ENCODE measurements at regions of chr12 and their contacts with region 1.

Region 1: DNA sequence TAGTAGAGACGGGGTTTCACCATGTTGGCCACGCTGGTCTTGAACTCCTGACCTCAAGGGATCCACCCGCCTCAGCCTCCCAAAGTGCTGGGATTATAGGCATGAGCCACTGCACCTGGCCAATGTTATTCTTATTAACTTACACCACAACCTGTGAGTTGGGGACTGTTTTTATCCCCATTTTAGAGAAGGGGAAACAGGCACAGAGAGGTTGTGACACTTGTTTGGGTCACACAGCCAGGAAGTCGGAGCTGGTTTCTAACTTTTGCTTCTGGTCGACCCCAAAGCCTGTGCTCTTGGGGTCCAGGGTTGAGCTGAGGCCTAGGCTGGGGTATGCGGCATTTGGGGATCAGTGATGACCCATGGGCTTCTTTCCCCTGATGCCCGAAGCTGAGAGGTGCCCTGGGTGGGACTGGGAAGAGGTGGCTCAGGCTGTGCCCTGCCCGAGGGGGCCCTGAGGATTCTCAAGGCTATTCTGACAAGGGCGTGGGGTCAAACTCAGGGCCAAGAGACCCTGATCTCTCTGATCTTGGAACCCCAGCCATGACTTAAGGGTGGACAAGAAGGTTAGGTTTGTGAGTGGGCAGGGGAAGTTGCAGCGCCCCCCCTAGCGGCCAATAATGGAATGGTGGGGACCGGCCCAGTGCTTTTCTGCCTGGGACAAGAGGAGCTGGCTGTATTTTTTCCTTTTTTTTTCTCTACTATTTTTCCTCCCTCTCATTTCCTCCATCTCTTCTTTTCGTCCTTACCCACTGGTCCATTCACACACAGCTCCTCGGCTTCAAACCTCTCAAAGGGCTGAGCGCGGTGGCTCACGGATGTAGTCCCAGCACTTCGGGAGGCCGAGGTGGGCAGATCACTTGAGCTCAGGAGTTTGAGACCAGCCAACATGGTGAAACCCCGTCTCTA is 3.0 kb downstream of the SDSL start:
- DNase-seq: peak; percentile 80
- ATAC-seq: peak; percentile 67
- H3K4me3 Mint-ChIP-seq: peak overlapping the region; percentile 75
- H3K27ac Mint-ChIP-seq: peak overlapping the region; percentile 93
- H3K4me1 Mint-ChIP-seq: peaks cover 16% of the 10 kb centered on the region
- H3K27me3 Mint-ChIP-seq: no peaks in the 10 kb centered on the region; the same call in 1 of the 2 replicates
- CTCF ChIP-seq: peak; percentile 94

Region 2: GRCh38 chr12:113267621-113268395 is 157.4 kb before region 1 on chr12:
- CTCF ChIA-PET with region 1: no interaction called
- POLR2A ChIA-PET with region 1: no interaction called
- DNase-seq: no peak
- ATAC-seq: no peak
- H3K4me3 Mint-ChIP-seq: no peak overlapping the region
- H3K27ac Mint-ChIP-seq: no peak overlapping the region
- H3K4me1 Mint-ChIP-seq: no peaks in the 10 kb centered on the region
- H3K27me3 Mint-ChIP-seq: no peaks in the 10 kb centered on the region
- CTCF ChIP-seq: no peak

Region 3: GRCh38 chr12:113316155-113316554 is 109.0 kb before region 1 on chr12:
- CTCF ChIA-PET with region 1: interaction called, 17 read pairs
- POLR2A ChIA-PET with region 1: no interaction called
- DNase-seq: no peak
- ATAC-seq: no peak
- H3K4me3 Mint-ChIP-seq: no peak overlapping the region
- H3K27ac Mint-ChIP-seq: no peak overlapping the region
- H3K4me1 Mint-ChIP-seq: no peaks in the 10 kb centered on the region
- H3K27me3 Mint-ChIP-seq: no peaks in the 10 kb centered on the region
- CTCF ChIP-seq: no peak

Region 4: DNA sequence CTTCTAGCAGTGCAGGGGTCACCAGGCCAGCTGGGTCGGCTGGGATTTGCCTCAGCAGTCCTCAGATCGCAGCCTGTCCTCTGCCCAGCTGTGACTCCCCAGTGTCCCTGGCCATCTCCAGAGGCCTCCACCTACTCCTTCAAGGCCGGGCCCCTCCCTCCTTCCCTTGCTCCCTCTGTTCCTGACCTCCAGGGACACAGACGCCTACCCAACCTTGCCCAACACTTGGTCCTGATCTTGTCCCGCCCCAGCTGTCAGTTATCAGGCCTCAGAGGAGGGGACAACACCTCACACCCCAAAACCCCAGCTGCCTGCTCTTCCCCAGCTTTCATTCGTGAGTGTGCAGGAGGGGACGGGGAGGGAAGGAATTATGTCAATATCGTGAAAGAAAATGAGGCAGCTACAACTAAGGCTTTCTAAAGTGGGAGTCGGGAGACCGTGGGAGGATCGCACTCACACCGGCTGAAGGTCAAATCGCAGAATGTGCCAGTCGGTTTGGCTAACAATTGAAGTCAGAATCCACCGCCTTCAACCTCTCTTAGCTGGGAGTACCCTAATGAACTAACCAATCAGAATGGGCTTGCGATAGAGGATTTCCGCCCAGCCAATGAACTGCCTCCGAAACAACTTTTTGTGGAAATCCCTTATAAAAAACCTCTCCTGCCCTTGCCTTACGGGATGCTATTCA is 76.2 kb before region 1 on chr12:
- CTCF ChIA-PET with region 1: interaction called, 16 read pairs
- POLR2A ChIA-PET with region 1: no interaction called
- DNase-seq: no peak
- ATAC-seq: peak; percentile 87
- H3K4me3 Mint-ChIP-seq: peak overlapping the region; percentile 47
- H3K27ac Mint-ChIP-seq: peak overlapping the region; percentile 63
- H3K4me1 Mint-ChIP-seq: peaks cover 18% of the 10 kb centered on the region
- H3K27me3 Mint-ChIP-seq: no peaks in the 10 kb centered on the region
- CTCF ChIP-seq: no peak

Region 5: DNA sequence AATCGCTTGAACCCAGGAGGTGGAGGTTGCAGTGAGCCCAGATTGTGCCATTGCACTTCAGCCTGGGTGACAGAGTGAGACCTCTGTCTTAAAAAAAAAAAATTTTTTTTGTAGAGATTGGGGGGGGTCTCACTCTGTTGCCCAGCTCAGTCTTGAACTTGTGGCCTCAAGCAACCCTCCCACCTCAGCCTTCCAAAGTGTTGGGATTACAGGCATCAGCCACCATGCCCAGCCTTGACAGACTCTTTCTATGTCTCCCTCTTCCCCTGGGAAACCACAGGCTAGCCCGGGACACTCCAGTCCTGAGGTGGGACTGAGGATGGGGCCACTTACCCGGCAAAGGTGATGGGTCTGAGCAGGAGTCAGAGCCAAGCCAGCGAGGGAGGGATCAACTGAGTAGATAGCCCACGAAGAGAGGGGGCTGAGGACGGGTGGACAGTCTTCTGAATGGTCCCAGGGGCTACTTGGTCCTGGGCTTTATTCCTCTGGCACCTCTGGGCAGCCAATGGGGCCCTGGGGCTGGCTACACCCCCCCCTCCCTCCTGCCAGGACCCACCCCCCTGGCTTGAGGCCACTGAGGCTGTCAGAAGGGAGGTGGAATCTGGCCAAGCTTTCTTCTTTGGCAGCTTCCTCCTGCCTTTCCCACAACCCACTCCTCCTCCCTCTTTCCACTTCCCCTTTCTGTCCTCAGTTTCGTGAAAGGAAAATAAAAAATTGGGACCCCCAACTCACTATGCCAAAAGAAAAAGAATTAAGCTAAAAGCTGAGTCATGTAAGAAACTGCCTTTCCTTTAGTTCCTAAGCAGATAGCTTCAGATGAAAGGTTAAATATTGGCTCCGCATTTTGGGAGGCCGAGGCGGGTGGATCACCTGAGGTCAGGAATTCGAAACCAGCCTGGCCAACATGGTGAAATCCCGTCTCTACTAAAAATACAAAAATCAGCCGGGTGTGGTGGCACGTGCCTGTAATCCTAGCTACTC is 21.4 kb before region 1 on chr12 and contains the start of gene SDS:
- CTCF ChIA-PET with region 1: interaction called, 41 read pairs
- POLR2A ChIA-PET with region 1: no interaction called
- DNase-seq: no peak
- ATAC-seq: no peak
- H3K4me3 Mint-ChIP-seq: no peak within 1 kb of the TSS
- H3K27ac Mint-ChIP-seq: no peak within 1 kb of the TSS
- H3K4me1 Mint-ChIP-seq: peaks cover 22% of the 10 kb centered on the region
- H3K27me3 Mint-ChIP-seq: no peaks in the 10 kb centered on the region
- CTCF ChIP-seq: no peak
- total RNA-seq, gene SDS: 0.21 to 0.46 TPM (median 0.31 TPM) in 3 replicates

Region 6: DNA sequence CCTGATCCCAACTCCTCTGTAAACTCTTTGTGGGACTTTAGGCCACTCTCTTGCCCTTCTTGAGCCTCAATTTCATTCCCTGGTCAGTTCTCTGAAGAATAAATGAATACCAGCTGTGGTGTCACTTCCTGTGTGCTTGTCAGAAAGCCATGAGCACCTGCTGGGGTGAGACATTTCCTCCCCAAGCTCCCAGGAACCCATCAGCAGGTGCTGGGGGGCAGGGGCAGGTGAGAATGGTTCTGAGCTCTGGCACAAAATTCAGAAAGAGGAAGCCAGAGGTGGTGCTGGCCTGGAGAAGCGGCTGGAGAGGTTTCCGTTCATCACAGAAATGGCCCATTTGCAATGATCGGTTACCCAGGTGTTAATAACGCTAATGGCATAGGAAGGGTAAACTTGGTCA is 31.6 kb after region 1 on chr12:
- CTCF ChIA-PET with region 1: interaction called, 17 read pairs
- POLR2A ChIA-PET with region 1: no interaction called
- DNase-seq: no peak
- ATAC-seq: no peak
- H3K4me3 Mint-ChIP-seq: no peak overlapping the region
- H3K27ac Mint-ChIP-seq: no peak overlapping the region
- H3K4me1 Mint-ChIP-seq: peaks cover 18% of the 10 kb centered on the region
- H3K27me3 Mint-ChIP-seq: peaks cover 24% of the 10 kb centered on the region
- CTCF ChIP-seq: no peak

Region 7: GRCh38 chr12:113569806-113570205 is 144.6 kb after region 1 on chr12:
- CTCF ChIA-PET with region 1: no interaction called
- POLR2A ChIA-PET with region 1: no interaction called
- DNase-seq: no peak
- ATAC-seq: no peak
- H3K4me3 Mint-ChIP-seq: no peak overlapping the region
- H3K27ac Mint-ChIP-seq: no peak overlapping the region
- H3K4me1 Mint-ChIP-seq: peaks cover 19% of the 10 kb centered on the region
- H3K27me3 Mint-ChIP-seq: no peaks in the 10 kb centered on the region
- CTCF ChIP-seq: no peak